Activated CD8-positive, alpha-beta T cell treated with anti-CD3 and anti-CD28 coated beads for 36 hours (primary cell): ENCODE measurements at regions of chrX and their contacts with region 1.

Region 1: DNA sequence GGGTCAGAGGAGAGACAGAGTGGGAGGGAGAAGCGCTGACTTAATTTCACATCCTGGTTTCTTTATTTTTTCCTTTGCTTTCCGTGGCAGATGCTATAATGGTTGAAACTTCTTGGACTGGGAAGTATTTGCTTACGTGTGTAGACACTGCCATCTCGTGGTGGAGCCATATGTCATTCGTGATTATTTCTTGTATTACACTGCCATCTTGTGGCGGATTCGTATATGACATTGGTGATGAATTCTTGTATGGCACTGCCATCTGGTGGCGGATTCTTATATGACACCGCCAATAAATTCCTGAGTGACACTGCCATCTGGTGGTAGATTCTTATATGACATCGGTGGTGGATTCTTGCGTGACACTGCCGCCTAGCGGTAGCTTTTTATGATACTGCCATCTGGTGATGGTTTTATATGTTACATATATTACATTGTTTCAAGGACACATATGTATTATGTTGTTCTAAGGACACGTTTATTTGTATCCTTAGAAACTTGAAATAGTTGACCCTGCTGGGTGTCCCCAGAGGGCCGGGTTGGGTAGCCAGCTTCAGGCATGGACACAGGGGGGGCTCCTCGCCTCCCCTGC is 37.3 kb upstream of the CLCN4 start:
- DNase-seq: peak; percentile 75
- ATAC-seq: peak; percentile 77
- H3K4me3 Mint-ChIP-seq: no peak overlapping the region
- H3K27ac Mint-ChIP-seq: peak overlapping the region; percentile 59
- H3K4me1 Mint-ChIP-seq: peaks cover 48% of the 10 kb centered on the region
- H3K27me3 Mint-ChIP-seq: no peaks in the 10 kb centered on the region
- CTCF ChIP-seq: peak; percentile 100

Region 2: DNA sequence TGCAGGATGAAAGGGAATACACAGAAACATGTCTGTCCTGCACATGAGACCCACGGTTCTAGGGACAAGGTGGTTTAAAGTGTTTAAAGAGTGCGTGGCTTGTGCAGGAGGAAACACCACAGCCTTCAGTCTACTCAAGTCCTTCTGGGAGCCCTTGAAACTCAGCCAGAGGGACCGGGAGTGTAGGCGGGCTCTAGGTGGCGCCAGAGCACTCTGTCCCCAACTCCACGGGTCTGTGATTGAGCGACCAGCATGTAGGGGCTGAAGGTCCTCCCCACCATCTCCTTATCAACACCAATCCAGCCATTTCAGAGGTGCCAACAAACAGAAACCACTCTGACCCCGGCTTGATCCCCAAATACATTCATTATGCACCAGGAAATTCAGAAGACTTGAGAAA is 234.3 kb before region 1 on chrX:
- CTCF ChIA-PET with region 1: interaction called, 11 read pairs
- POLR2A ChIA-PET with region 1: no interaction called
- intact Hi-C with region 1: loop called (anchors 5 kb)
- DNase-seq: peak; percentile 75
- ATAC-seq: peak; percentile 65
- H3K4me3 Mint-ChIP-seq: no peak overlapping the region
- H3K27ac Mint-ChIP-seq: no peak overlapping the region
- H3K4me1 Mint-ChIP-seq: no peaks in the 10 kb centered on the region
- H3K27me3 Mint-ChIP-seq: peaks cover 7% of the 10 kb centered on the region
- CTCF ChIP-seq: peak; percentile 56

Region 3: GRCh38 chrX:9995855-9996339 is 123.6 kb before region 1 on chrX:
- CTCF ChIA-PET with region 1: interaction called, 244 read pairs
- POLR2A ChIA-PET with region 1: interaction called, 5 read pairs
- intact Hi-C with region 1: loop called (anchors 2 kb)
- DNase-seq: peak; percentile 79
- ATAC-seq: peak; percentile 50
- H3K4me3 Mint-ChIP-seq: no peak overlapping the region
- H3K27ac Mint-ChIP-seq: no peak overlapping the region
- H3K4me1 Mint-ChIP-seq: peaks cover 17% of the 10 kb centered on the region
- H3K27me3 Mint-ChIP-seq: no peaks in the 10 kb centered on the region
- CTCF ChIP-seq: peak; percentile 84

Region 4: DNA sequence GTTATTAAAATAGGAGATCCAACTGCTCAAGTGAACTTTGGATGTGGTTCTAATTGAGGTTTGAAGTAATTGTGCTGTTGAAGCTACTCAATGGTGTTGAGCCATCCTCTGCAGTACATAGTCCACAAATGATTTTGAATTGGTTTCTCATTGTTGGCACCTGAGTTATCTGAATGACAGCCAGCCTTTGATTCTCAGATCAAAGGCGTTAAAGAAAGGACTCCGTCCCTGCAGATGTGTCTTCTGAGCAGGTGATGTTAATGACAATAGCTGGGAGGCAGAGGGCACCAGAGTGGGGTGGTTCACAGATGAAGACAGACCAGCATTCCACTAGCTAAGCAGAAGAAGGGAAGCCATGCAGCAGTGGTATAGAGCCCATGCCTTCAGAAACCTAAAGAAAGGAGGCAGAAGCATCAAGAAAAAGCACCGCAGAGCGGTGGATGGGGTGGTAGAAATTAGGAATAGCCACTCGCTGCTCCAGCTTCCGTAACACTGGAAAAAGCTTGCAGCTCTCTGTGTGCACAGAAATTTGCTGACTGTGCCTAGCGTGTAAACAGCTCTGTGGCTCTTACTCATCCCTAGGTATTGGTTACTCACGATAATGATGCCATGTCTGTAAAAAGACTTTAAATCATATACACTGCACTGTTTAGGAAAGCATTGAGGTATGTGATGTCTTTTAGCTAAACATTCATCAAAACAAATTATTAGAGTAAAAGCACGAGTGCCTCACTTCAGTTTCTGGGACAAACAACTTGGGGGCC is 41.9 kb before region 1 on chrX:
- CTCF ChIA-PET with region 1: interaction called, 20 read pairs
- POLR2A ChIA-PET with region 1: no interaction called
- intact Hi-C with region 1: loop called (anchors 5 kb)
- DNase-seq: peak; percentile 15
- ATAC-seq: peak; percentile 62
- H3K4me3 Mint-ChIP-seq: no peak overlapping the region
- H3K27ac Mint-ChIP-seq: no peak overlapping the region
- H3K4me1 Mint-ChIP-seq: peaks cover 13% of the 10 kb centered on the region
- H3K27me3 Mint-ChIP-seq: no peaks in the 10 kb centered on the region
- CTCF ChIP-seq: no peak

Region 5: DNA sequence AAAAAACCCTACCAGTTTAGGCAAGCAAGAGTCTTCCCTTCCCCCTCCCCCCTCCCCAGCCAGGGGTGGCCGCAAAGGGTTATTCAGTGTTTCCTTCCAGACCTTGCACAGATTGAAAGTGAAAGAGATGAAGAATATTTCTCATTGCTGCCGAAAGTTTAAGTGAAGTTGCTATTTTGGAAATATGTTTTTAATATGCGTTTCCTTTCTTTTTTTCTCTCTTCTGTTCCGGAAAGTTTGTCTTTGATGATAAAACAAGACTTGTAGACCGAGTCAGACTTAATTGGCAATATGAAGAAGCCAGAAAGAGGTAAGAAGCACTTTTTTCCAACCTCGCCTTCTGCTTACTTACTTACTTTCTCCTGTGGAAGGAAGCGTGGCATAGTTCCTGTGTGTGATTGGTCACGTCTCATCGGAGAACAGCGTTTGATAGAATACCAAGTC is 21.2 kb before region 1 on chrX:
- CTCF ChIA-PET with region 1: interaction called, 18 read pairs
- POLR2A ChIA-PET with region 1: interaction called, 3 read pairs
- intact Hi-C with region 1: no loop called
- DNase-seq: peak; percentile 79
- ATAC-seq: peak; percentile 61
- H3K4me3 Mint-ChIP-seq: peak overlapping the region; percentile 83
- H3K27ac Mint-ChIP-seq: peak overlapping the region; percentile 97
- H3K4me1 Mint-ChIP-seq: peaks cover 48% of the 10 kb centered on the region
- H3K27me3 Mint-ChIP-seq: no peaks in the 10 kb centered on the region
- CTCF ChIP-seq: no peak